Activated CD4-positive, alpha-beta T cell treated with anti-CD3 and anti-CD28 coated beads for 36 hours (primary cell): ENCODE measurements at regions of chr9 and their contacts with region 1.

Region 1: GRCh38 chr9:71858812-71859211 is 52.2 kb downstream of the ABHD17B start:
- DNase-seq: no peak
- ATAC-seq: peak; percentile 96
- H3K4me3 Mint-ChIP-seq: no peak overlapping the region
- H3K27ac Mint-ChIP-seq: peak overlapping the region; percentile 40
- H3K4me1 Mint-ChIP-seq: peaks cover 18% of the 10 kb centered on the region
- H3K27me3 Mint-ChIP-seq: no peaks in the 10 kb centered on the region

Region 2: DNA sequence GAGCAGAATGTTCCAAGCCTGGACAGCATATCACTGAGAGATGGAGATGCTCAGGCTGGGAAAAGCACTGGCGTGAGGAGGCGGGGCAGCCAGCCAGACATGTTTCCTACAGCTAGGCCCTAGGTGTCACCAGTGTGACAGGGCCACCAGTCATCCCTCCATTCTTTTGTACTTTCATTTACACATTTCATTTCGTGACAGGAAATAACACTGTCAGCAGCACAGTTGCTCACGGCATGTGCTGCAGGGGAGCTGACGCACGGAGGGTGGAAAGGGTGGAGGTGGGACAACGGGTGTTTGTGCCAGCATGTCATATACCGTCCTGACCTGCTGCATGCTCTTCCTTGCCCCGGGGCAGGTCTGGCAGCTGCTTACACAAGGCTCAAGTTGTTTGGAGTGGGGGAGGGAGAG is 75.7 kb before region 1 on chr9:
- CTCF ChIA-PET with region 1: no interaction called
- POLR2A ChIA-PET with region 1: no interaction called
- intact Hi-C with region 1: loop called (anchors 1 to 10 kb)
- DNase-seq: peak; percentile 93
- ATAC-seq: peak; percentile 97
- H3K4me3 Mint-ChIP-seq: peak overlapping the region; percentile 68
- H3K27ac Mint-ChIP-seq: peak overlapping the region; percentile 98
- H3K4me1 Mint-ChIP-seq: peaks cover 48% of the 10 kb centered on the region
- H3K27me3 Mint-ChIP-seq: no peaks in the 10 kb centered on the region

Region 3: DNA sequence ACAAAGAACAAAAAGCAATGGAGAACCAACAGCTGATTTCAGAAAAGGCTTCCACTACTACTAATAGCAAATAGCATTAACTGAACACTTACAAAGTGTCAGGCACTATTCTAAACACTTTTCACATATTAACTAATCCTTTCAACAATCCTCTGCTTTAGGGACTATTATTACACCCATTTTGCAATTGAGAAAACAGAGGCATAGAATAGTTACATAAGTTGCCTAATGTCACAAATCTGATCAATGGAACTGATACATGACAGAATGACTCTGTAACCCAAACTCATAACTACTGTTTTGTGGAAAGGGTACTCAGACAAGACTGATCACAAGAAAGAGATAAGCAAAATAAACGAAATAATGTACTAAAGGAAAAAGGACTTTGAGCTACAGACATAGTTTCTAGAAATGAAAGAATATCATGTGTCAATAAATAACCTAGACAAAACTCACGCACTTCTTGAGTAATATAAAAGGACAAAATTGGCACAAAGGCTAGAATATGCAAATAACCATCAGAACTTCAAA is 20.9 kb after region 1 on chr9:
- CTCF ChIA-PET with region 1: interaction called, 9 read pairs
- POLR2A ChIA-PET with region 1: no interaction called
- intact Hi-C with region 1: loop called in 1 of 2 experiments (anchors 2 kb)
- DNase-seq: no peak
- ATAC-seq: no peak
- H3K4me3 Mint-ChIP-seq: no peak overlapping the region
- H3K27ac Mint-ChIP-seq: no peak overlapping the region
- H3K4me1 Mint-ChIP-seq: peaks cover 15% of the 10 kb centered on the region
- H3K27me3 Mint-ChIP-seq: no peaks in the 10 kb centered on the region

Region 4: GRCh38 chr9:71885467-71885866 is 26.7 kb after region 1 on chr9:
- CTCF ChIA-PET with region 1: no interaction called
- POLR2A ChIA-PET with region 1: interaction called, 3 read pairs
- intact Hi-C with region 1: loop called (anchors 2 kb)
- DNase-seq: no peak
- ATAC-seq: no peak
- H3K4me3 Mint-ChIP-seq: no peak overlapping the region
- H3K27ac Mint-ChIP-seq: no peak overlapping the region
- H3K4me1 Mint-ChIP-seq: peaks cover 31% of the 10 kb centered on the region
- H3K27me3 Mint-ChIP-seq: no peaks in the 10 kb centered on the region

Region 5: DNA sequence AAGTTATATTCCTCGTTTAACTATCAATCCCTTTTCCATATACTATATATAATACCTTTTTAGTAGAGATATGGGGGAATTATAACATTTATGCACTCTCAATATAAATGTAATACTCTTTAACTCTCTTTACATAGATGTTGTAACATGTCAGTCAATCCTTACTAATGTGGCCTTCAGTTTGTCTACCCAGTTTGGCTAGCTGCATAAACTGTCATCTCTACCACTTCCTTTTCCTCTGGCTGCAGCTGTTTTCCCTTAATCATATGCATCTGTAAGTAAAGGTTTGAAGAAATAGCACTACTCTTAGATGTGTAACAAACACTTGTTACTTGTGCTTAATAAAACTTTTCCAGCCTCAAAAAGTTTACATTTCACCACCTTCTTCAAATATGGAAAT is 38.8 kb after region 1 on chr9:
- CTCF ChIA-PET with region 1: no interaction called
- POLR2A ChIA-PET with region 1: no interaction called
- intact Hi-C with region 1: loop called (anchors 5 kb)
- DNase-seq: no peak
- ATAC-seq: peak; percentile 69
- H3K4me3 Mint-ChIP-seq: no peak overlapping the region
- H3K27ac Mint-ChIP-seq: no peak overlapping the region
- H3K4me1 Mint-ChIP-seq: peaks cover 75% of the 10 kb centered on the region
- H3K27me3 Mint-ChIP-seq: no peaks in the 10 kb centered on the region

Region 6: GRCh38 chr9:73548201-73548600 is 1689.4 kb after region 1 on chr9:
- CTCF ChIA-PET with region 1: no interaction called
- POLR2A ChIA-PET with region 1: no interaction called
- intact Hi-C with region 1: no loop called
- DNase-seq: no peak
- ATAC-seq: no peak
- H3K4me3 Mint-ChIP-seq: no peak overlapping the region
- H3K27ac Mint-ChIP-seq: no peak overlapping the region
- H3K4me1 Mint-ChIP-seq: no peaks in the 10 kb centered on the region
- H3K27me3 Mint-ChIP-seq: no peaks in the 10 kb centered on the region